ENCODE measurements at regions of chr2 and their contacts with region 1.

Region 1: DNA sequence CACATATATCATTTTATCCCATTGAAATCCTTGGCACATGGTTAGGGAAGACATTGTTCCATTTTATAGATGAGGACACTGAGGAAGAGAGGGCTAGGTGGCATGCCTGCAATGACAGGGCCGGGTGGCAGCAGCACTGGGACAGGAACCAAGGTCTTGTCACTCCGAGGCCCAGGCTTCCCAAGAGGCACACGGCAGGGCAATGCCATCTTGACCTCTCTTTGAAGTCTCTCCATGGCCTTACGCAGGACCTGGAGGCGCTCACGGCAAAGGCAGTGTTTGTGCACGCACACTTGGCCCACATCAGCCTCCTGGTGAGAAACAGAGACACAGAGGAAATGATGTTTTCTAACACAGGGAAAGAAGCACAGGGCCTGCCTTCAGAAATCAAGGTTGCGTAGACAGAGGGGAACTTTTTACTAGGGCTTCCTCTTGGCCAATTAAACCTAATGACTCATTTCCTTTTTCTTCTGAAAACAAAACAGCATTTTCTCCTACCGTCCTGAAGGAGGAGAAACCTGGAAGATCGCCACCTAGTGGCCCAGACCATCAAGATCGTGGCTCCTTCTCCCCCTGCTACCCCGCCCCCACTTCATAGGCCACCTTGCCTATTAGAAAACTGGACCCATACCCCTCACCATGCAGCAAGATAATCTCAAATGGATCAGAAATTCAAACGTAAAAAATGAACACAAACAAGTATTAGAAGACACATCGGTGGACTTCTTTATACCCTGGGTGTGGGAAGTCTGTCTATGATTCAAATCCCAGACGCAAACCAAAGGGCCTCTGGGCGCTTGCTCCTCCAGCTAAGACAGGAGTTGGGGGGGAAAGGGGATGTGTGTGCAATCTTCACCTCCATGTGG is 74.6 kb upstream of the SP3 start:
- DNase-seq: peak; percentile 90

Region 2: DNA sequence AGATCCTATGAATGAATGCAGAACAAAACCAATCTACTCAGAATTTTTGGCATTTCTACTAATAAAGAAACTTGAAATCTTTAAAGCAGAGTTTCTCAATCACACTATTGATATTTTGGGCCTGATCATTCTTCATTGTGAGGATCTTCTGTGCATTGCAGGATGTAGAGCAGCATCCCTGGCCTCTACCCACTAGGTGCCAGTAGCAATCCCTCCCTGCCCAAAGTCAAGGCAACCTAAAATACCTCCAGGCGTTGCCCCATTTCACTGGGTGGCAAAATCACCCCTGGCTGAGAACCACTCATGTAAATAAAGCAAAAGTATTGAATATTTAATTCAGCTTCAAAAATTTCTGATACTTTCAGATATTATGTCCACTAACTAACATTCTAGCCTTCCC is 287.6 kb before region 1 on chr2:
- intact Hi-C with region 1: loop called (anchors 10 kb)
- DNase-seq: no peak

Region 3: GRCh38 chr2:173965329-173966025 is 74.3 kb before region 1 on chr2 and contains the start of gene SP3:
- intact Hi-C with region 1: loop called (anchors 2 kb)
- DNase-seq: peak; percentile 99
- total RNA-seq, gene SP3: 45.4 TPM

Region 4: GRCh38 chr2:174078275-174078674 is 38.5 kb after region 1 on chr2:
- intact Hi-C with region 1: no loop called
- DNase-seq: no peak

Region 5: GRCh38 chr2:174248187-174248997 is 208.6 kb after region 1 on chr2 and contains the start of gene OLA1:
- intact Hi-C with region 1: loop called (anchors 10 kb)
- DNase-seq: peak; percentile 97
- total RNA-seq, gene OLA1: 51.2 TPM

Measured in cardiac septum (tissue), 1 donor.